Vagina (tissue), 2 donors: ENCODE measurements at regions of chr1 and their contacts with region 1.

Region 1: GRCh38 chr1:116956378-116956777 is 45.2 kb upstream of the CD101 start:
- DNase-seq: no peak
- H3K4me3 ChIP-seq: no peak overlapping the region
- H3K27ac ChIP-seq: no peak overlapping the region
- H3K4me1 ChIP-seq: no peaks in the 10 kb centered on the region
- H3K27me3 ChIP-seq: no peaks in the 10 kb centered on the region
- CTCF ChIP-seq: no peak
- POLR2A ChIP-seq: no peak

Region 2: GRCh38 chr1:116919802-116920201 is 36.6 kb before region 1 on chr1:
- intact Hi-C with region 1: loop called (anchors 1 kb)
- DNase-seq: no peak
- H3K4me3 ChIP-seq: no peak overlapping the region
- H3K27ac ChIP-seq: no peak overlapping the region
- H3K4me1 ChIP-seq: peaks cover 61% of the 10 kb centered on the region
- H3K27me3 ChIP-seq: no peaks in the 10 kb centered on the region
- CTCF ChIP-seq: no peak
- POLR2A ChIP-seq: no peak